HepG2 (cell line): ENCODE measurements at regions of chr5 and their contacts with region 1.

Region 1: DNA sequence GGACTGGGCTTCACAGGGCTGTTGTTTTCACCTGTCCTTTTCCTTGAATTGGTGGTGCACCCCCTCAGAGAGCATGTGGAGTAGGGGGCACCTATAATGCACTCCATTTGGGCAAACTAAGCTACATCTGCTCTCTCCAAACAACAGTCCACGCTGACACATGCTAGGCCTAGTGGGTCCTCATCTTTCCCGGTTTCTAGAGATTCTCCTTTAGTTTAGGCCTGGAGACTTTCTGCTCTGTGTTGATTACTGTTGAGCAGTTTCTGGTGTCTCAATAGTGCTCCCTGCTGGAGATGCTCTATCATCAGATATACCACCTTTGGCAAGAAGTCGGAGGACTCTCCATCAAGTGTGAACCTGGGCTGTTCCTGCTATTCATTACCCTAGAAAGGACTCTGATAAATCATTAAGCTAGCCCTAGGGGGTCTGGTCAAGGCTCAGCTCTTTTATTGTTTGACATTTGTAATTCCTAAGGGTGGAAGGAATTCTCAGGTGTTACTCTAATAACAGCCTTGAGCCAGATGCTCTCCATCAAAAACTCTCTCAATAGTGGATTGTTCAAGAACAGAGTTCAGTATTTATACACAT is 64.0 kb upstream of the FYB1 start:
- DNase-seq: peak; percentile 67
- ATAC-seq: peak; percentile 99
- H3K4me3 ChIP-seq: no peak overlapping the region
- H3K27ac ChIP-seq: no peak overlapping the region
- H3K4me1 ChIP-seq: peaks cover 25% of the 10 kb centered on the region
- H3K27me3 ChIP-seq: no peaks in the 10 kb centered on the region
- CTCF ChIP-seq: peak; percentile 81
- EP300 ChIP-seq: no peak
- POLR2A ChIP-seq: no peak
- RAD21 ChIP-seq: peak; percentile 55

Region 2: GRCh38 chr5:38994324-38994927 is 288.9 kb before region 1 on chr5:
- CTCF ChIA-PET with region 1: interaction called, 3 read pairs
- POLR2A ChIA-PET with region 1: no interaction called
- in situ Hi-C with region 1: no loop called
- intact Hi-C with region 1: loop called (anchors 10 kb)
- DNase-seq: peak; percentile 64
- ATAC-seq: peak; percentile 83
- H3K4me3 ChIP-seq: no peak overlapping the region
- H3K27ac ChIP-seq: no peak overlapping the region
- H3K4me1 ChIP-seq: no peaks in the 10 kb centered on the region
- H3K27me3 ChIP-seq: no peaks in the 10 kb centered on the region
- CTCF ChIP-seq: peak; percentile 43
- EP300 ChIP-seq: no peak
- POLR2A ChIP-seq: no peak
- RAD21 ChIP-seq: no peak

Region 3: GRCh38 chr5:39148983-39149534 is 134.3 kb before region 1 on chr5:
- CTCF ChIA-PET with region 1: interaction called, 11 read pairs
- POLR2A ChIA-PET with region 1: no interaction called
- in situ Hi-C with region 1: loop called (anchors 10 kb)
- intact Hi-C with region 1: loop called (anchors 1 kb)
- DNase-seq: peak; percentile 5
- ATAC-seq: no peak
- H3K4me3 ChIP-seq: no peak overlapping the region
- H3K27ac ChIP-seq: no peak overlapping the region
- H3K4me1 ChIP-seq: no peaks in the 10 kb centered on the region
- H3K27me3 ChIP-seq: no peaks in the 10 kb centered on the region
- CTCF ChIP-seq: 0 out of 2 replicates have a peak, but pooled peaks have one; percentile 13
- EP300 ChIP-seq: no peak
- POLR2A ChIP-seq: no peak
- RAD21 ChIP-seq: no peak

Region 4: GRCh38 chr5:39158127-39158593 is 125.2 kb before region 1 on chr5:
- CTCF ChIA-PET with region 1: no interaction called
- POLR2A ChIA-PET with region 1: no interaction called
- in situ Hi-C with region 1: loop called (anchors 10 kb)
- intact Hi-C with region 1: no loop called
- DNase-seq: no peak
- ATAC-seq: no peak
- H3K4me3 ChIP-seq: no peak overlapping the region
- H3K27ac ChIP-seq: no peak overlapping the region
- H3K4me1 ChIP-seq: no peaks in the 10 kb centered on the region
- H3K27me3 ChIP-seq: no peaks in the 10 kb centered on the region
- CTCF ChIP-seq: no peak
- EP300 ChIP-seq: no peak
- POLR2A ChIP-seq: no peak
- RAD21 ChIP-seq: no peak

Region 5: GRCh38 chr5:39217365-39218281 is 65.7 kb before region 1 on chr5:
- CTCF ChIA-PET with region 1: interaction called, 20 read pairs
- POLR2A ChIA-PET with region 1: no interaction called
- in situ Hi-C with region 1: loop called (anchors 5 kb)
- intact Hi-C with region 1: loop called (anchors 1 kb)
- DNase-seq: peak; percentile 70
- ATAC-seq: peak; percentile 93
- H3K4me3 ChIP-seq: no peak overlapping the region
- H3K27ac ChIP-seq: no peak overlapping the region
- H3K4me1 ChIP-seq: peaks cover 13% of the 10 kb centered on the region
- H3K27me3 ChIP-seq: no peaks in the 10 kb centered on the region
- CTCF ChIP-seq: peak; percentile 89
- EP300 ChIP-seq: no peak
- POLR2A ChIP-seq: no peak
- RAD21 ChIP-seq: peak; percentile 73

Region 6: DNA sequence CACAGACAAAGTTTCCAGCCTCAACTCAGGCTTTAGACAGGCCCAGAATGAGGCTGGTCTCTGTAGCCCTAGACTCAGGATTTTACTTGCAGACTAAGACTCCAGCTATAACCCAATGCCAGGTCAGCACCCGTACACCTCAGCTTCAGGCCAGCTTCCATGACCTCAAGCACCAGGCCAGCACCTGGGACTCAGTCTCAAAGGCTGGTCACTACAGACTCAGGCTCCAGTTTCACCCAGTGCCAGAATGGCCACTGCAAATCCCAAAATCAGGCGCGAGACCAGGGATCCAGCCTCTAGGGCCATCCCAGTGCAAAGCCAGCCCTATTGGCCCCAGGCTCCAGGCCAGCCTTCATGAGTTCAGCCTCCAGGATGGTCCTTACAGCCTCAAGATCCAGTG is 36.1 kb after region 1 on chr5:
- CTCF ChIA-PET with region 1: no interaction called
- POLR2A ChIA-PET with region 1: no interaction called
- in situ Hi-C with region 1: no loop called
- intact Hi-C with region 1: loop called (anchors 1 kb)
- DNase-seq: no peak
- ATAC-seq: no peak
- H3K4me3 ChIP-seq: no peak overlapping the region
- H3K27ac ChIP-seq: no peak overlapping the region
- H3K4me1 ChIP-seq: no peaks in the 10 kb centered on the region
- H3K27me3 ChIP-seq: no peaks in the 10 kb centered on the region
- CTCF ChIP-seq: no peak
- EP300 ChIP-seq: no peak
- POLR2A ChIP-seq: no peak
- RAD21 ChIP-seq: no peak

Region 7: DNA sequence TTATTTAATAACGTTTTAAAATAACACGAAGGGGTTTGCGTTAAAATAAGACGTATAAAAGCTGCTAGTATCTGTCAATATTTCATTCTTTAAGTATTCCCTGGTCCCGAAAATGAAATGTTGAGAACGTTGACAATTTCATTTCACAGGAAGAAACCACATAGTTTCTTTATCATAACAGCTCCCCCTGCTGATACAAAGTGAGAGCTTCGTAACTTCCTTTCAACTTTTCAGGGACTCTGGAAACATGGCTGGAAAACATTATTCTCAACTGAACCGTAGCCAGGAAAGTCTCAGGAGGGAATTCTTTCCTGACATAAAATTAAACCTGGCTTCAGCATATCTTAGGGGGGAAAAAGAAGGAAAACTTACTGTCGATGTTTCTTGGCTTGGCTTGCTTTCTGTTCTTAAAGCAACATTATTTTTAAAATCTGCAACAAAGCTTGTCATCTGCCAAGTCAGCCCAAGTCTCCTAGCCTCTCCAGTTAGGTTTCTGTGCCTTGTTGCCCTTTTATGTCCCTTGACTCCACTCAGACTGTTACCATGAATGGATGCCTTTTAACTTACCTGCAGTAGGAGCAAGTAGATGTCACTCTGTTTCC is 264.3 kb after region 1 on chr5:
- CTCF ChIA-PET with region 1: no interaction called
- POLR2A ChIA-PET with region 1: no interaction called
- in situ Hi-C with region 1: no loop called
- intact Hi-C with region 1: loop called (anchors 10 kb)
- DNase-seq: peak; percentile 41
- ATAC-seq: peak; percentile 74
- H3K4me3 ChIP-seq: no peak overlapping the region
- H3K27ac ChIP-seq: no peak overlapping the region
- H3K4me1 ChIP-seq: no peaks in the 10 kb centered on the region
- H3K27me3 ChIP-seq: peaks cover 0 to 8% of the 10 kb centered on the region in 2 experiments; a peak in 1 of 5 replicates
- CTCF ChIP-seq: peak; percentile 72
- EP300 ChIP-seq: no peak
- POLR2A ChIP-seq: no peak
- RAD21 ChIP-seq: peak; percentile 67